Motor neuron (in vitro differentiated cells): ENCODE measurements at regions of chr1 and their contacts with region 1.

Region 1: GRCh38 chr1:35298464-35298863 is 30.0 kb downstream of the ZMYM4 start:
- ATAC-seq: peak; percentile 32 to 95 (median 65)
- H3K4me3 ChIP-seq: no peak overlapping the region
- H3K27ac ChIP-seq: no peak overlapping the region
- H3K4me1 ChIP-seq: no peaks in the 10 kb centered on the region

Region 2: GRCh38 chr1:35192853-35193664 is 105.4 kb before region 1 on chr1 and contains the start of gene SFPQ:
- in situ Hi-C with region 1: loop called in 2 of 9 experiments (anchors 10 to 25 kb)
- ATAC-seq: peak; percentile 88 to 92 (median 90)
- H3K4me3 ChIP-seq: peak within 1 kb of the TSS; percentile 74 to 97 (median 94)
- H3K27ac ChIP-seq: peak within 1 kb of the TSS; percentile 97 to 99
- H3K4me1 ChIP-seq: peaks cover 23 to 29% of the 10 kb centered on the region in 2 donors
- total RNA-seq, gene SFPQ: 165 to 606 (median 223) TPM

Region 3: DNA sequence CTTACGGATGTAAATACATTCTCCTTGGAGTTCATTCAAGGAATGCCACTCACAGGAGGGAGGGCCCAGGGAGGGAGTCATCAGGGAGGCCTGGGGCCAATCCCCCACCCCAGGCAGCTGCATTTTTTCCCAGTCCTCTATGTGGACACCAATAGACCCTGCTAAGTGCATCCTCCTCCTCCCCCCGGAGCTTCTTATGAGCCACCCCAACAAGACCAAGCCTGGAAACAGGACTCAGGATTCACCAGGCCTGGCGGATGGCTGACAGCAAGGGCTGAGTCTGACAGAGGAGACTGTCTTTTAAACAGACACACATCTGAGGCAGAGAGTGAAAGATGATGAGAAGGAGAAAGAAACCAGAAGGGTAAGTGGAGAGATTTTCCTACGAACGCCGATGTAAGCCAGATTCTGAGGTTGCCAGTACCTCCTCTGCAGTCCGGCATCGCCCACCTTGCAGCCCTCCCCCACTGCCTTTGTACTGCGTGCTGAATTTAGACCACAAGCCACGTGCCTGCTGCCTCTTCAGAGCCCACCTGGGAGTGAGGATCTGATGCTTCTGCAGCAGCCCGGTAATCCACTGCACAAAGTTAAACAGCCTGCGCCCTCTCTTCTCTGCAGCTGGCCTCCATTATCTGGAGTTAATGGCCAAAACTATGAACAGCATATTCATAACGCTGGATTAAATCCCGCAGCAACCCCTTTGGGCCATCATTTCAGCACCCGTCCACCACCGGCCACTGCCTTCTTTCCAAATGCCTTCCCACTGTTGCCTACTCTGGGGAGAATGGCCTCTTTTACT is 87.9 kb before region 1 on chr1:
- in situ Hi-C with region 1: no loop called
- ATAC-seq: peak; percentile 44 to 90 (median 64)
- H3K4me3 ChIP-seq: no peak overlapping the region
- H3K27ac ChIP-seq: no peak overlapping the region
- H3K4me1 ChIP-seq: peaks cover 8 to 10% of the 10 kb centered on the region in 2 donors

Region 4: GRCh38 chr1:35229587-35230360 is 68.7 kb before region 1 on chr1:
- in situ Hi-C with region 1: loop called in 1 of 9 experiments (anchors 10 kb)
- ATAC-seq: no peak
- H3K4me3 ChIP-seq: no peak overlapping the region
- H3K27ac ChIP-seq: no peak overlapping the region
- H3K4me1 ChIP-seq: no peaks in the 10 kb centered on the region

Region 5: GRCh38 chr1:35377555-35377954 is 79.1 kb after region 1 on chr1:
- in situ Hi-C with region 1: loop called in 1 of 9 experiments (anchors 25 kb)
- ATAC-seq: peak in 2 of 8 experiments; percentile 66 to 74
- H3K4me3 ChIP-seq: no peak overlapping the region
- H3K27ac ChIP-seq: no peak overlapping the region
- H3K4me1 ChIP-seq: no peaks in the 10 kb centered on the region

Region 6: GRCh38 chr1:35641233-35641866 is 342.9 kb after region 1 on chr1 and contains the start of gene PSMB2:
- in situ Hi-C with region 1: no loop called
- ATAC-seq: peak; percentile 92 to 99 (median 98)
- H3K4me3 ChIP-seq: peak within 1 kb of the TSS; percentile 67 to 99 (median 96)
- H3K27ac ChIP-seq: peak within 1 kb of the TSS; percentile 83 to 92
- H3K4me1 ChIP-seq: peaks cover 19 to 20% of the 10 kb centered on the region in 2 donors
- total RNA-seq, gene PSMB2: 50.1 to 109 (median 74.9) TPM